PC-9 (cell line): ENCODE measurements at regions of chr1 and their contacts with region 1.

Region 1: DNA sequence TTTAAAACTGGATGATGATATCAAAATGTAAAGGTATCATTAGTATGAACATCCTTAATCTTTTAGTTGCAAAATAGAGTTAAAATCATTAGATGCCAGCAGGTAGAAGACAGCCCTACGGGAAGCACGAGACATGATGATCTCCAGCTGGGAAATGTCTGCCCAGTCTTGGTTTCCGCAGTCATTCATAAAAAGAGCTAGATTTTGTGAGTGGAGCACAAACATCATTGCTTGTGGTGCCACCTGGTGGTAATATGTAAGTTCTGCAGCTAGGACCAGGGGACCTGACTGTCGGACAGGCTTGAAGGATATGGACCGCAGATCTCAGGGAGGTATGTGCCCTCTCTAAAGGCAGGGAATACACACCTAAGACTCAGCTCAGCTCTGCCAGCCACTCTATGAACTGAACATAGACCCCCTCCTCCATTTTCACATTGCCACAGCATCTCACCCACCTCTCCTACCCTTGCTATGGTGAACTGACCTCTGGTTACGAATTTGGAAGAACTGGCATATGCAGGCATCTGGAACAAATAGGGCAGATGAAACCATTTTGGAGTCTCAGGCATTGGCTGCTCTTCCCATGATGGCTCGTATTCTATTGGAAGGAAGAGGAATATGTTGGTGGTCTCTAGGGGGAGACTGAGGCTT is 9.2 kb downstream of the FCMR start:
- DNase-seq: peak; percentile 56 to 65
- H3K4me3 ChIP-seq: no peak overlapping the region
- H3K27ac ChIP-seq: no peak overlapping the region
- H3K4me1 ChIP-seq: peaks cover 7% of the 10 kb centered on the region
- H3K27me3 ChIP-seq: no peaks in the 10 kb centered on the region
- CTCF ChIP-seq: peak; percentile 83

Region 2: GRCh38 chr1:206606856-206607255 is 305.7 kb before region 1 on chr1:
- CTCF ChIA-PET with region 1: interaction called, 3 read pairs
- POLR2A ChIA-PET with region 1: no interaction called
- intact Hi-C with region 1: loop called (anchors 2 kb)
- DNase-seq: peak in 1 of 2 experiments; percentile 55
- H3K4me3 ChIP-seq: no peak overlapping the region
- H3K27ac ChIP-seq: no peak overlapping the region
- H3K4me1 ChIP-seq: peaks cover 8% of the 10 kb centered on the region
- H3K27me3 ChIP-seq: no peaks in the 10 kb centered on the region
- CTCF ChIP-seq: peak; percentile 77

Region 3: DNA sequence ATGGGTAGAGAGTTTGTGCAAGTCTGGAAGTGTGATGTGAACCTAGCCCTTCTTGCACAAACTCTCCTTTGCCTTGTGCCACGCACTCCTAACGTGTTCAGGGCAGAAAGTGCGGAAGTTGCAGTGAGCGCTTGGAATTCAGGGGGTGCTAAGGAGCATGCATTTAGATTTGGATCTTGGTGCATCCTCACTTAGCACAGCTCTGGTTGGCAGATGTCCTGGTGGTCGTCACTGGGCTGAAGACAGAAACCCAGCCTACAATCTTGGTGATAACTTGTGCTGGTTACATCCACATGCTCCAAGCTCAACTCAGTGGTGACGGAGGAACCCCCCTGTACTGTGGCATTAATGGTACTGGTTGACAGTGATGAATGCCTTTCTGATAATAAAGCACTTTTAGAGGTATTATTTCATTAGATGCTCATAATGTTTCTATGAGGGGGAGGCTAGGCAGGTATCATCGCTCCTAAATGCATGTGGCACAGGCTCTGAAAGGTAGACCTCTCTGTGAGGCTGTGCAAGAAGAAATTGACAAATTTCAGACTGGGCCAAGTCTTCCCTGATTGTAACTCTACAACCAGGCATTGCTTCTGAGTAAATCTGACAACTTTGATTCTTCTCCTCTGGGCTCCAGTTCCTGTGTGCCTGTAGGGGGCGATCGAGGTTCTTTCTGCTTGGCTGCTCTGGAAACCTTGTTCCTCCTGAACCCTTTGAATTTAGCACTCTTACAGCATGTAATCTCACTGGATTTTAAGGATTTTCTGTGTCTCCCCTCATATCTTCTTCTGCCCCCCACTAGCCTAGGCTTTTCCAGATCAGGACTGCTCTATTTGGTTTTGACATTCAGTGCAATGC is 187.2 kb before region 1 on chr1:
- CTCF ChIA-PET with region 1: interaction called, 4 read pairs
- POLR2A ChIA-PET with region 1: no interaction called
- intact Hi-C with region 1: loop called (anchors 2 kb)
- DNase-seq: peak in 1 of 2 experiments; percentile 21
- H3K4me3 ChIP-seq: no peak overlapping the region
- H3K27ac ChIP-seq: no peak overlapping the region
- H3K4me1 ChIP-seq: peaks cover 44% of the 10 kb centered on the region
- H3K27me3 ChIP-seq: no peaks in the 10 kb centered on the region
- CTCF ChIP-seq: no peak; the same call in 1 of the 2 replicates

Region 4: GRCh38 chr1:206865013-206865671 is 47.4 kb before region 1 on chr1 and contains the start of gene IL20:
- CTCF ChIA-PET with region 1: interaction called, 5 read pairs
- POLR2A ChIA-PET with region 1: no interaction called
- intact Hi-C with region 1: loop called (anchors 2 kb)
- DNase-seq: peak; percentile 48 to 61
- H3K4me3 ChIP-seq: no peak within 1 kb of the TSS
- H3K27ac ChIP-seq: no peak within 1 kb of the TSS
- H3K4me1 ChIP-seq: no peaks in the 10 kb centered on the region
- H3K27me3 ChIP-seq: peaks cover 28% of the 10 kb centered on the region
- CTCF ChIP-seq: peak; percentile 85
- total RNA-seq, gene IL20: not detected in 2 replicates

Region 5: DNA sequence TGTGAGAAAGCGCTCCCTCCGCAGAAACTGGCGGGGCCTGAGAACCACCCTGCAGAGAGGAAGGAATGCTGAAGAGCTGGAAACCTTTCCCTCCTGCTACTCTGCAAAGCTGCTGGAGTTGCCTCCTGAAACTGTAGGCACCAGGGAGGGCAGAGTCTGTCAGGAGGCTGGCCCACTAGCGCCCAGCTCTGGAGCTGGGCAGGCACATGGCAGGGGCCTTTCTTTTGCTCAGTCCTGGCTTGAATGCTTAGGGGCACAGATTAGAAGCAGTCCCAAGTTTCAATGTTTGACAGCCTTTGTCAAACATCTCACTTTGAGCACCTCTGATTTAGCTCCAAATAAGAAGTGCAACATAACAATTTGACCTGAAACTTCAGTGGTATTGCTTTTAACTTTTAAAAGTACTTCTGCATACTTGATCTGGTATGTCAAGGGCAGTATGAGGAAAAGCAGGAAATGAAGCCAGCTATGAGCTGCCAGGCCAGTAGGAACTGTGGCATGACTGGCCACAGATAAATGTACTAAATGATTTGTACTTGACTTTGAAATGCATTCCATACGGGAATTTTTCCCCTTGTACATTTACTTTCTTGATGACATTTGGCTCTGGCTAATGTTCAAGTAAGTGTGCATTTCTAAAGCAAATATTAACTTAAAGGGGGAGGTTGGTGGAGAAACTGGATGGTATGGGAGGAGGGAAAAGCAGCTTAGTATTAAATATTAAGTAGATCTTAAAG is 112.7 kb after region 1 on chr1:
- CTCF ChIA-PET with region 1: no interaction called
- POLR2A ChIA-PET with region 1: interaction called, 3 read pairs
- intact Hi-C with region 1: loop called (anchors 2 kb)
- DNase-seq: peak; percentile 80 to 90
- H3K4me3 ChIP-seq: no peak overlapping the region
- H3K27ac ChIP-seq: peak overlapping the region; percentile 97
- H3K4me1 ChIP-seq: peaks cover 90% of the 10 kb centered on the region
- H3K27me3 ChIP-seq: no peaks in the 10 kb centered on the region
- CTCF ChIP-seq: no peak

Region 6: GRCh38 chr1:207499573-207499972 is 587.0 kb after region 1 on chr1:
- CTCF ChIA-PET with region 1: interaction called, 4 read pairs
- POLR2A ChIA-PET with region 1: no interaction called
- intact Hi-C with region 1: loop called (anchors 5 kb)
- DNase-seq: peak; percentile 62 to 64
- H3K4me3 ChIP-seq: no peak overlapping the region
- H3K27ac ChIP-seq: no peak overlapping the region
- H3K4me1 ChIP-seq: no peaks in the 10 kb centered on the region
- H3K27me3 ChIP-seq: peaks cover 28% of the 10 kb centered on the region
- CTCF ChIP-seq: peak; percentile 87